Esophagus muscularis mucosa (tissue), 4 donors: ENCODE measurements at regions of chr1 and their contacts with region 1.

Region 1: GRCh38 chr1:172745014-172745413 is 86.1 kb downstream of the FASLG start:
- DNase-seq: no peak
- H3K4me3 ChIP-seq: no peak overlapping the region
- H3K27ac ChIP-seq: peak overlapping the region in 1 of 4 donors; percentile 36
- H3K4me1 ChIP-seq: peaks cover 0 to 24% (median 21%) of the 10 kb centered on the region in 4 donors
- H3K27me3 ChIP-seq: no peaks in the 10 kb centered on the region
- CTCF ChIP-seq: peak; percentile 46 to 56 (median 54)
- EP300 ChIP-seq: no peak
- POLR2A ChIP-seq: no peak

Region 2: DNA sequence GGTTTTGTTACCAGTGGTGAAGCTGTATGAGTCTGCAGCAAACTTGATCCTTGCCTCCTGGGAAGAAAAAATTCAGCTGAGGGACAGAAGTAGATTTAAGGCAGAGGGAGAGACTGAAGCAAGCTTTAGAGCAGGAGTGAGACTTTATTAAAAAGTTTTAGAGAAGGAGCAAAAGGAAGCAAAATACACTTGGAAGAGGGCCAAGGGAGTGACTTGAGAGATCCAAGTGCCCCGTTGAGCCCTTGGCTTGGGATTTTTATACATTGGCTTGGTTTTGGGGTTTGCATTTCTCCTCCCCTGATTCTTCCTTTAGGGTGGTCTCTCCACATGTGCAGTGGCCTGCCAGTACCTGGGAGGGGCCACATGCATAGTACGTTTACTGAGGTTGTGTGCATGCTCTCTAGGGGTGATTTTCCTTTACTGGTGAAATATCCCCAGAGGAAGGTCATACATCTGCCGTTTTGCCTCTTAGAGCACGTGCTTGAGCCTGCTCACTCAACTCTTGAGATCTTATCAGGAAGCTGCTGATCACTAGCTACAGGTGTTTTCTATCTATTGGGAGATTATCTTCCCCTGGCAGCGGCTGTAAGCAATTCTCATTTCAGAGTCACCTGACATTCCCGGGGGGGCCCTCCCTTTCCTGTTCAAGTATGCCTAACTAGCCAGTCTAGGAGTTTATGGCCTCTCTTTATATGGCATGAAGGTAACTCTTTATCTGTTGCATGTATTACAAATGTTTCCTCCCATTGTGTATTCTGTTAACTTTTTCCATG is 65.8 kb before region 1 on chr1:
- intact Hi-C with region 1: no loop called
- DNase-seq: no peak
- H3K4me3 ChIP-seq: no peak overlapping the region
- H3K27ac ChIP-seq: no peak overlapping the region
- H3K4me1 ChIP-seq: no peaks in the 10 kb centered on the region
- H3K27me3 ChIP-seq: no peaks in the 10 kb centered on the region
- CTCF ChIP-seq: no peak
- EP300 ChIP-seq: no peak
- POLR2A ChIP-seq: no peak

Region 3: GRCh38 chr1:172821609-172822274 is 76.7 kb after region 1 on chr1:
- intact Hi-C with region 1: loop called (anchors 5 kb)
- DNase-seq: no peak
- H3K4me3 ChIP-seq: no peak overlapping the region
- H3K27ac ChIP-seq: no peak overlapping the region
- H3K4me1 ChIP-seq: peaks cover 5 to 17% (median 14%) of the 10 kb centered on the region in 4 donors
- H3K27me3 ChIP-seq: no peaks in the 10 kb centered on the region
- CTCF ChIP-seq: no peak
- EP300 ChIP-seq: no peak
- POLR2A ChIP-seq: no peak

Region 4: DNA sequence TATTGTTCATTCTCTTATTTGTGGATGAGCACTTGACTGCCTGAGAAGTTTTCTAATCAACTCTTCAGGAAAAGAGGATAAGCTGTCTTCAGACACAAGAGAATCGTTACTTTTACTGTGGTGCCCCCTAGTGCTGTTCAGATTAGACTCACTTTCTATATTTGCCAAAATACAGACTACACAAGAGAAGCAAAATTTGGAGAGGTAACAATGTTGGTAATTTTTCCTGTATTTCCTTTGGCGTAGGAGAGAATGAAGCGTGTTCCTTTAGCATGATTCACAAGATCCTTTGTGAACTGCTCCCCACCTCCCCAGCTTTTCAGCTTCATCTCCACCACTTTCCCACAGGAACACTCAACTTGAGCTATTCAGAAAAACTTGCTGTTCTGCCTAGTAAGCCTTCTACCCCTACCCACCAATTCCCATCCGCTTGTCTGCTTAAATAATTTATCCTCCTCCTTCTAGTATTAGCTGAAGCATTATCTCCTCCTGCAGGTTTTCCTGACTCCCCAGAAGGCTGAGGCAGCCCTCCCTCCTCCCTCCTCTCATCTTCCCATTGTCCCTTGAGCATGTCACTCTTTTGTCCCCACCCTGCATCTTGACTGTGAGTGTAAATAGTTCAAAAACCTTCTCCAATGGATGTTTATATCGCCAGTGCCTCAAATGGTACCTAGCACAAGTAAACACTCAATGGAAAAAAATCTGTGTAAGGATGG is 457.6 kb after region 1 on chr1:
- intact Hi-C with region 1: loop called (anchors 2 kb)
- DNase-seq: no peak
- H3K4me3 ChIP-seq: no peak overlapping the region
- H3K27ac ChIP-seq: peak overlapping the region in 1 of 4 donors; percentile 1
- H3K4me1 ChIP-seq: peaks cover 12 to 30% (median 23%) of the 10 kb centered on the region in 4 donors
- H3K27me3 ChIP-seq: no peaks in the 10 kb centered on the region
- CTCF ChIP-seq: peak; percentile 49 to 69 (median 68)
- EP300 ChIP-seq: no peak
- POLR2A ChIP-seq: no peak

Region 5: DNA sequence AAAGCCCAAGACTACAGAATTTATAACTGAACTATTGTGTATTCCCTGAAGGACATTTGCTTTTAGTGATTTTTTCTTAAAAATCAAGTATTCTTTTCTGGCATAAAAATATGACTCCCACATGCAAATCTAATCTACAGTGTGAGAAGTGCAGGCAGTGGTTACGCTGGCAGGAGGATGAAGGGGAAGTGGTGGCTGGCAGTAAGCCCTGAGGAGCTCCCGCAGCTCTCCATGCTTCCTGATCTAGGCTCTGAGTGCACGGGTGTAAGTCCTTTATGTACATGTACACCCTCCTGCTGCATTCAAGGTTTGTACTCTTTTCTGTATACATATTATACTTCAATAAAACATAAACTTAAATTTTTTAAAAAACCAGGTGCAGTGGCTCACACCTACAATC is 664.6 kb after region 1 on chr1:
- intact Hi-C with region 1: loop called (anchors 10 kb)
- DNase-seq: no peak
- H3K4me3 ChIP-seq: no peak overlapping the region
- H3K27ac ChIP-seq: no peak overlapping the region
- H3K4me1 ChIP-seq: peaks cover 0 to 7% (median 3%) of the 10 kb centered on the region in 4 donors
- H3K27me3 ChIP-seq: no peaks in the 10 kb centered on the region
- CTCF ChIP-seq: no peak
- EP300 ChIP-seq: no peak
- POLR2A ChIP-seq: no peak

Region 6: GRCh38 chr1:173824331-173825081 is 1079.5 kb after region 1 on chr1 and contains the starts of genes CENPL and DARS2:
- intact Hi-C with region 1: loop called (anchors 10 kb)
- DNase-seq: peak; percentile 98
- H3K4me3 ChIP-seq: peak within 1 kb of the TSS; percentile 80 to 86 (median 82)
- H3K27ac ChIP-seq: peak within 1 kb of the TSS; percentile 90 to 95 (median 94)
- H3K4me1 ChIP-seq: peaks cover 10 to 39% (median 24%) of the 10 kb centered on the region in 4 donors
- H3K27me3 ChIP-seq: no peaks in the 10 kb centered on the region
- CTCF ChIP-seq: no peak
- EP300 ChIP-seq: no peak
- POLR2A ChIP-seq: no peak
- total RNA-seq, gene CENPL: 3.6 to 7.1 (median 5.8) TPM
- total RNA-seq, gene DARS2: 5.5 to 9.1 (median 7.7) TPM